T-cell (primary cell): ENCODE measurements at regions of chr6 and their contacts with region 1.

Region 1: GRCh38 chr6:107917451-107918375 is 40.3 kb downstream of the SEC63 start:
- DNase-seq: no peak
- ATAC-seq: no peak
- H3K4me3 ChIP-seq: no peak overlapping the region
- H3K4me3 Mint-ChIP-seq: no peak overlapping the region
- H3K27ac ChIP-seq: no peak overlapping the region
- H3K27ac Mint-ChIP-seq: no peak overlapping the region
- H3K4me1 ChIP-seq: no peaks in the 10 kb centered on the region
- H3K4me1 Mint-ChIP-seq: peaks cover 0 to 14% (median 0%) of the 10 kb centered on the region in 3 donors
- H3K27me3 ChIP-seq: no peaks in the 10 kb centered on the region
- H3K27me3 Mint-ChIP-seq: no peaks in the 10 kb centered on the region

Region 2: DNA sequence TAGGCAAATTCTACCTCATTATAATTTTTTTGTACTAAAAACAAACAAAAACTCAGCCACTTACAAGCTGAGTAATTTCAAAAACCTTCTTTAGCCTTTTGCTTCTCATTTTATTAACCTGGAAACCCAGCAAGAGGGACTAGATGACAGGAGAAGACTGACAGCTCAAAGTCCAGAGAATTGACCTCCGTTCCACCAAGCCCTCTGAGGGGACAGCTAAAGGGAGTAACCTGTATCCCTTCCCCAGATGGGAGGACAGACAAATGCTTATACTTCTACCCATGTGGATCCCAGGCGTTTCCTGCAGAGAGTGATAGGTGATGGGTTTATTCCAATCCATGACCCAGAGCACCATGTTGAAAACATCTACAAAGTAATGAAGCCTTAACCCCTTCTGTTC is 908.2 kb before region 1 on chr6:
- CTCF ChIA-PET with region 1: no interaction called
- POLR2A ChIA-PET with region 1: no interaction called
- DNase-seq: no peak
- ATAC-seq: no peak
- H3K4me3 ChIP-seq: no peak overlapping the region
- H3K4me3 Mint-ChIP-seq: no peak overlapping the region
- H3K27ac ChIP-seq: no peak overlapping the region
- H3K27ac Mint-ChIP-seq: no peak overlapping the region
- H3K4me1 ChIP-seq: no peaks in the 10 kb centered on the region
- H3K4me1 Mint-ChIP-seq: no peaks in the 10 kb centered on the region
- H3K27me3 ChIP-seq: peaks cover 0 to 11% of the 10 kb centered on the region in 2 experiments
- H3K27me3 Mint-ChIP-seq: peaks cover 9% of the 10 kb centered on the region in 2 donors

Region 3: GRCh38 chr6:107964671-107965340 is 47.1 kb after region 1 on chr6:
- CTCF ChIA-PET with region 1: no interaction called
- POLR2A ChIA-PET with region 1: no interaction called
- DNase-seq: no peak
- ATAC-seq: no peak
- H3K4me3 ChIP-seq: no peak overlapping the region
- H3K4me3 Mint-ChIP-seq: no peak overlapping the region
- H3K27ac ChIP-seq: no peak overlapping the region
- H3K27ac Mint-ChIP-seq: no peak overlapping the region
- H3K4me1 ChIP-seq: no peaks in the 10 kb centered on the region
- H3K4me1 Mint-ChIP-seq: no peaks in the 10 kb centered on the region
- H3K27me3 ChIP-seq: peaks cover 0 to 3% of the 10 kb centered on the region in 2 experiments
- H3K27me3 Mint-ChIP-seq: no peaks in the 10 kb centered on the region

Region 4: GRCh38 chr6:108020472-108021116 is 102.9 kb after region 1 on chr6:
- CTCF ChIA-PET with region 1: interaction called in 1 of 2 experiments, 11 read pairs
- POLR2A ChIA-PET with region 1: interaction called in 1 of 2 experiments, 3 read pairs
- DNase-seq: no peak
- ATAC-seq: no peak
- H3K4me3 ChIP-seq: no peak overlapping the region
- H3K4me3 Mint-ChIP-seq: no peak overlapping the region
- H3K27ac ChIP-seq: no peak overlapping the region
- H3K27ac Mint-ChIP-seq: no peak overlapping the region
- H3K4me1 ChIP-seq: no peaks in the 10 kb centered on the region
- H3K4me1 Mint-ChIP-seq: no peaks in the 10 kb centered on the region
- H3K27me3 ChIP-seq: no peaks in the 10 kb centered on the region
- H3K27me3 Mint-ChIP-seq: peaks cover 1 to 7% of the 10 kb centered on the region in 2 donors

Region 5: GRCh38 chr6:108052706-108053105 is 135.0 kb after region 1 on chr6:
- CTCF ChIA-PET with region 1: interaction called in 1 of 2 experiments, 10 read pairs
- POLR2A ChIA-PET with region 1: no interaction called
- DNase-seq: no peak
- ATAC-seq: no peak
- H3K4me3 ChIP-seq: no peak overlapping the region
- H3K4me3 Mint-ChIP-seq: no peak overlapping the region
- H3K27ac ChIP-seq: no peak overlapping the region
- H3K27ac Mint-ChIP-seq: no peak overlapping the region
- H3K4me1 ChIP-seq: no peaks in the 10 kb centered on the region
- H3K4me1 Mint-ChIP-seq: peaks cover 0 to 7% (median 0%) of the 10 kb centered on the region in 3 donors
- H3K27me3 ChIP-seq: no peaks in the 10 kb centered on the region
- H3K27me3 Mint-ChIP-seq: no peaks in the 10 kb centered on the region

Region 6: DNA sequence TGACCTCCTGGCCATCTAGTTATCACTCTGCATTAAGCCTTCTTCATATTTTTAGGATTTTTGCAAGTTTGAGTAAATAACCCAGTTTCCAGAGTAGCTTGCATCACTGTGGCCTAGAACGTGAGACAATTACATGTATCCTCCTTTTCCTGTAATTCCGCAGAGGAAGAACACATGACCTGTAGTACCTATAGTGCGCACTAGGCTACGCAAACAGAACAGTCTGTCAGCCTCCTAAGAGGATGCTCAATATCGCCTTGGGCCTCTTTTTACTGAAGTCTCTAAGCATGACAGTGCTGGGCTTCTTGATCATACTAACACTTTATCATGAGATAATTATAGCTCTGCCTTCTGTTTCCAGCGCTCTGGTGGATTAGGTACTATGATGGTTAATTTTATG is 227.9 kb after region 1 on chr6:
- CTCF ChIA-PET with region 1: no interaction called
- POLR2A ChIA-PET with region 1: no interaction called
- DNase-seq: no peak
- ATAC-seq: no peak
- H3K4me3 ChIP-seq: no peak overlapping the region
- H3K4me3 Mint-ChIP-seq: no peak overlapping the region
- H3K27ac ChIP-seq: no peak overlapping the region
- H3K27ac Mint-ChIP-seq: no peak overlapping the region
- H3K4me1 ChIP-seq: no peaks in the 10 kb centered on the region
- H3K4me1 Mint-ChIP-seq: no peaks in the 10 kb centered on the region
- H3K27me3 ChIP-seq: peaks cover 7 to 34% of the 10 kb centered on the region in 2 experiments
- H3K27me3 Mint-ChIP-seq: peaks cover 45 to 47% of the 10 kb centered on the region in 2 donors